PC-9 (cell line): ENCODE measurements at regions of chr2 and their contacts with region 1.

Region 1: GRCh38 chr2:54531558-54531957 is 75.4 kb downstream of the SPTBN1 start:
- DNase-seq: peak; percentile 56 to 88
- H3K4me3 ChIP-seq: no peak overlapping the region; the same call in 1 of the 2 replicates
- H3K27ac ChIP-seq: peak overlapping the region; percentile 87
- H3K4me1 ChIP-seq: peaks cover 41% of the 10 kb centered on the region
- H3K27me3 ChIP-seq: no peaks in the 10 kb centered on the region
- CTCF ChIP-seq: no peak

Region 2: GRCh38 chr2:54475285-54475684 is 56.3 kb before region 1 on chr2:
- CTCF ChIA-PET with region 1: no interaction called
- POLR2A ChIA-PET with region 1: no interaction called
- intact Hi-C with region 1: no loop called
- DNase-seq: no peak
- H3K4me3 ChIP-seq: no peak overlapping the region
- H3K27ac ChIP-seq: no peak overlapping the region
- H3K4me1 ChIP-seq: peaks cover 10% of the 10 kb centered on the region; the same call in 1 of the 2 replicates
- H3K27me3 ChIP-seq: no peaks in the 10 kb centered on the region
- CTCF ChIP-seq: no peak

Region 3: GRCh38 chr2:54551123-54551756 is 19.7 kb after region 1 on chr2:
- CTCF ChIA-PET with region 1: no interaction called
- POLR2A ChIA-PET with region 1: interaction called, 4 read pairs
- intact Hi-C with region 1: loop called (anchors 2 kb)
- DNase-seq: peak; percentile 55 to 56
- H3K4me3 ChIP-seq: no peak overlapping the region
- H3K27ac ChIP-seq: peak overlapping the region; percentile 20
- H3K4me1 ChIP-seq: peaks cover 56% of the 10 kb centered on the region
- H3K27me3 ChIP-seq: no peaks in the 10 kb centered on the region
- CTCF ChIP-seq: no peak

Region 4: GRCh38 chr2:54558188-54559005 is 26.8 kb after region 1 on chr2:
- CTCF ChIA-PET with region 1: no interaction called
- POLR2A ChIA-PET with region 1: no interaction called
- intact Hi-C with region 1: loop called (anchors 1 kb)
- DNase-seq: peak; percentile 72 to 73
- H3K4me3 ChIP-seq: peak overlapping the region; percentile 90
- H3K27ac ChIP-seq: peak overlapping the region; percentile 95
- H3K4me1 ChIP-seq: peaks cover 49% of the 10 kb centered on the region
- H3K27me3 ChIP-seq: no peaks in the 10 kb centered on the region
- CTCF ChIP-seq: no peak

Region 5: GRCh38 chr2:54597153-54597848 is 65.7 kb after region 1 on chr2:
- CTCF ChIA-PET with region 1: no interaction called
- POLR2A ChIA-PET with region 1: interaction called, 15 read pairs
- intact Hi-C with region 1: loop called (anchors 2 kb)
- DNase-seq: no peak
- H3K4me3 ChIP-seq: no peak overlapping the region
- H3K27ac ChIP-seq: no peak overlapping the region
- H3K4me1 ChIP-seq: no peaks in the 10 kb centered on the region
- H3K27me3 ChIP-seq: no peaks in the 10 kb centered on the region
- CTCF ChIP-seq: no peak

Region 6: GRCh38 chr2:54629914-54630857 is 98.6 kb after region 1 on chr2:
- CTCF ChIA-PET with region 1: no interaction called
- POLR2A ChIA-PET with region 1: no interaction called
- intact Hi-C with region 1: no loop called
- DNase-seq: no peak
- H3K4me3 ChIP-seq: no peak overlapping the region
- H3K27ac ChIP-seq: no peak overlapping the region
- H3K4me1 ChIP-seq: no peaks in the 10 kb centered on the region
- H3K27me3 ChIP-seq: no peaks in the 10 kb centered on the region
- CTCF ChIP-seq: no peak

Region 7: GRCh38 chr2:54708584-54709335 is 177.2 kb after region 1 on chr2:
- CTCF ChIA-PET with region 1: no interaction called
- POLR2A ChIA-PET with region 1: no interaction called
- intact Hi-C with region 1: no loop called
- DNase-seq: peak in 1 of 2 experiments; percentile 43
- H3K4me3 ChIP-seq: no peak overlapping the region
- H3K27ac ChIP-seq: no peak overlapping the region
- H3K4me1 ChIP-seq: no peaks in the 10 kb centered on the region
- H3K27me3 ChIP-seq: no peaks in the 10 kb centered on the region
- CTCF ChIP-seq: no peak

Region 8: GRCh38 chr2:54787755-54788366 is 256.3 kb after region 1 on chr2:
- CTCF ChIA-PET with region 1: no interaction called
- POLR2A ChIA-PET with region 1: interaction called, 14 read pairs
- intact Hi-C with region 1: no loop called
- DNase-seq: no peak
- H3K4me3 ChIP-seq: no peak overlapping the region
- H3K27ac ChIP-seq: no peak overlapping the region
- H3K4me1 ChIP-seq: peaks cover 9% of the 10 kb centered on the region
- H3K27me3 ChIP-seq: no peaks in the 10 kb centered on the region
- CTCF ChIP-seq: no peak

Region 9: GRCh38 chr2:55668956-55669355 is 1137.4 kb after region 1 on chr2:
- CTCF ChIA-PET with region 1: no interaction called
- POLR2A ChIA-PET with region 1: no interaction called
- intact Hi-C with region 1: no loop called
- DNase-seq: no peak
- H3K4me3 ChIP-seq: no peak overlapping the region
- H3K27ac ChIP-seq: no peak overlapping the region
- H3K4me1 ChIP-seq: no peaks in the 10 kb centered on the region
- H3K27me3 ChIP-seq: no peaks in the 10 kb centered on the region
- CTCF ChIP-seq: no peak